ENCODE measurements at regions of chr1 and their contacts with region 1.

Region 1: DNA sequence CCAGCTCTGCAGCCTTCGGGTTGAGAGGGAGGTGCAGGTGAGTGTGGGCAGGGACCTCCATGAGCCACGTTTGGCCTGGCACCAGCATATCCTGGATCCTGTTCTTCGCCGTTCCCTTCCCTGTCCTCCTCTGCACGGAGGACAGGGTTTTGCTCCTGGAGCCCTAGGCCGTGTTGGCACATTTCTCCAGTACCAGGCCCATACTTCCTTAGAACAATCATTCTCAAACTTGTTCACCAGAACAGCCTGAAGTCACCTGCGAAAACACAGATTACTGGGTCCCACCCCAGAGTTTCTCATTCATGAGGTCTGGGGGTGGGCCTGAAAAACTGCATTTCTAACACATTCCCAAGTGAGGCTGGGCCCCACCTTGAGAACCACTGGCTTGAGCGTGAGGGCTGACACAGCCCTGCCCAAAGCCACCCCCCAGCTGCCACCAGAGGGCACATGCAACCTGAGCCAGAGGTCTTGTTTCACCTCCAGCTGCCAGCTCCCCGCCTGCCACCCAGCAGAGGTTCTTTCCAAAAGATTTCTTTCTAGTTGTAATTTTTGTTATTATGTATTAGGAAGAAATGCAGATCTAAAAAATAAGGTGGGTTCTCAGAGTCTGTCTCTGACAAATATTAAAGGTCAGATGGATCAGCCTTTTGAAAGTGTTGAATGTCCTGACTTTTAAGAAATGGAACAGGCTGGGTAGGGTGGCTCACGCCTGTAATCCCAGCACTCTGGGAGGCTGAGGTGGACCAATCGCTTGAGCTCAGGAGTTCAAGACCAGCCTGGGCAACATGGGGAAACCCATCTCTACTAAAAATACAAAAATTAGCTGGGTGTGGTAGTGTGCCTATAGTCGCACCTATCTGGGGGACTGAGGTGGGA is 39.6 kb upstream of the LDLRAP1 start:
- DNase-seq: peak; percentile 72
- H3K4me3 ChIP-seq: no peak overlapping the region
- H3K27ac ChIP-seq: no peak overlapping the region
- H3K4me1 ChIP-seq: peaks cover 15% of the 10 kb centered on the region
- CTCF ChIP-seq: peak; percentile 91

Region 2: DNA sequence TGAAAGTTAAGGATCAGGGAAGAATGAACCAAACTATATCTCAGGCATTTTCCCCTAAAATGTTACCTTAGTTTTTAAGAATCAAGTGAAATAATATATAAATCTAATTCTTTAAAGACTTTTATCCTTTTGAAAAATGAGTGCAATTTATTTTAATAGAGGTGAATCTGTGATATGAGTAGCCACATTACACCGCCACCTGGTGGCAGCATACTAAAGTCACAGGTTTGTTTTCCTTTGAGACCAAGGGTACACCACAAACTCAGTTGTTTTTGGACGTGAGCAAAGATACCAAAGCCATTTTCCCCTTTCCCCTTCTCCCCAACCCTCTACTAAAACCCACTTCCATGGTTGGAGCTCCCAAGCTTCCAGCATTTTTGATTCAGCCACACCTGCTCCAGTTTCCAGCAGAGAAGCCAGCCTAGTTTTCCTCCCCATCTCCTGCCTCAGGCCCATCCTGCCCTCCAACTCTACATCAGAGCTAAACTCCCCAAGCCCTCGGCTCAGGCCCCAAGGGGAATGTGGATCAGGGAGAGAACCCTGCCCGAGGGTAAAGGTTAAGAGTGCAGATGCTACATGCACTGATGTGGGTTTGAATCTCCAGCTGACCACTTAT is 16.8 kb after region 1 on chr1:
- CTCF ChIA-PET with region 1: no interaction called
- POLR2A ChIA-PET with region 1: interaction called, 4 read pairs
- intact Hi-C with region 1: loop called (anchors 1 kb)
- DNase-seq: peak; percentile 80
- H3K4me3 ChIP-seq: no peak overlapping the region
- H3K27ac ChIP-seq: no peak overlapping the region
- H3K4me1 ChIP-seq: peaks cover 4% of the 10 kb centered on the region
- CTCF ChIP-seq: peak; percentile 95

Region 3: DNA sequence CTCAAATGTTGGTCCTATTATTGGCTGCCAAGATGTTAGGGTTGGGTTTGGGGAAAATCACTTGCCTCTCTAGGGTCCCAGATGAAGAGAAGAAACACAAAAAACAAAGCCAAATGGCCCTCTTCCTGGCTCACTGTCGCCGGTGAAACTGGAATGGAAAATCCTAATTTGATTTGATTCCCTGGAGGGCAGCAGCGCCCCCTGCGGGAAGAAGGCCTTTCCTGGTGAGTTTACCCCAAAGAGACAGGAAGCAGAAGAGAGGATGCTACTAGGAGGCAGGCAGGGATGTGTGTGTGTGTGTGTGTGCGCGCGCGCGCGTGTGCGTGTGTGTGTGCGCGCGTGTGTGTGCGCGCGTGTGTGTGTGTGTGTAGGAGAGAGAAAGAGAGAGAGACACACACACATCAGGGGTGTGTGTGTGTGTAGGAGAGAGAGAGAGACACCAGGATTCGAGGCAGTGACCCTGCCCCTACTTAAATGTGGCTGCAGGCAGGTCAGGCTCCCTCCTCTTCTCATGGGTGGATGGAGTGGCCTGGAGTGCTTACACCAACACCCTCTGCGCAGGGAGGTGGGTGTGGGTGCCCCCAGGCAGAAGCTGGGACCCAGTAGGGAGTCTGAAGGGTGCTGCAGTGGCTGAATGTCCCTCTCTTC is 293.1 kb after region 1 on chr1:
- CTCF ChIA-PET with region 1: no interaction called
- POLR2A ChIA-PET with region 1: no interaction called
- intact Hi-C with region 1: loop called (anchors 5 kb)
- DNase-seq: peak; percentile 83
- H3K4me3 ChIP-seq: no peak overlapping the region
- H3K27ac ChIP-seq: no peak overlapping the region
- H3K4me1 ChIP-seq: peaks cover 32% of the 10 kb centered on the region
- CTCF ChIP-seq: peak; percentile 84

Region 4: GRCh38 chr1:25810341-25811299 is 306.8 kb after region 1 on chr1:
- CTCF ChIA-PET with region 1: no interaction called
- POLR2A ChIA-PET with region 1: no interaction called
- intact Hi-C with region 1: loop called (anchors 1 kb)
- DNase-seq: peak; percentile 76
- H3K4me3 ChIP-seq: no peak overlapping the region
- H3K27ac ChIP-seq: peak overlapping the region; percentile 43
- H3K4me1 ChIP-seq: peaks cover 21% of the 10 kb centered on the region
- CTCF ChIP-seq: peak; percentile 94